ENCODE measurements at regions of chr16 and their contacts with region 1.

Region 1: DNA sequence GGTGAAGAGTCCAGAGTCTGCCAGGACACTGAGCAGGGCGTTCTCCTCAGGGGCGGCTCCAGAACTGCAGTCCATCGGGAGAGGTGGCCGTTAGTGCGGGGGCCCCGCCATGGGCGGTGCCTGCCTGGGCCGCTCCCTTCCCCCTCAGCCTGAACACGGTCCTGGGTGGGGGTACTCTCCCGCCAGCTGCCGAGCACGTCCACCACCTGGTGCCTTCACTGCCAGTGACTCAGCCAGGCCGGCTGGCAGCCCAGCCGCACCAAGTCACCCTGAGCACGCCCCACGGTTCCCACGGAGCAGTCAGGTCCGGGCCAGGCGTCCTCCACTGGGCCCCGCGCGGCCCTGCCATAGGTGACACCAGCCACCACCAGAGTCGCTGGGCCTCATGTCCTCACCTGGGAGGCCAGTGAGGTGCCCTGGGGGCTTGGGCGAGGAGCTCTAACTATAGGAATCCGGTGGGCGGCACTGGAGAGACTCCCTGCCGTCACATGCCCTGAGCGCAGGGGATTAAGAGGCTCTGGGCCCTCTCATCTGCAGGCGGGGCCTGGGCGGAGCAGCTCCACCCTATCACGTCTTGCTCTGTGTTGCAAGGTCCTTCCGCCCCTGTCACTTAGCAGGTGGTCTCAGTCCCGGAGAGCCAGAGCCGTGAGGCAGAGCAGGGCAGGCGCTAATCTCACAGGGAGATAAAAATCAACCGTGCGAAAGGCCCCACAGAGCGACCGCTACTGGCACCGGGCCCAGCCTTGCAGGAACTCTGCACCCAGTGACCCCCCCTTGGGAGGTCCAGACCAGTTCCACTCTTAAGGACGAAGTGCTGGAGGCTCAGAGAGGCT is 14.3 kb downstream of the PIEZO1 start:
- DNase-seq: peak; percentile 65
- H3K4me3 Mint-ChIP-seq: peak overlapping the region; percentile 56
- H3K27ac Mint-ChIP-seq: no peak overlapping the region
- H3K4me1 Mint-ChIP-seq: peaks cover 62% of the 10 kb centered on the region
- H3K27me3 Mint-ChIP-seq: no peaks in the 10 kb centered on the region
- CTCF ChIP-seq: no peak

Region 2: DNA sequence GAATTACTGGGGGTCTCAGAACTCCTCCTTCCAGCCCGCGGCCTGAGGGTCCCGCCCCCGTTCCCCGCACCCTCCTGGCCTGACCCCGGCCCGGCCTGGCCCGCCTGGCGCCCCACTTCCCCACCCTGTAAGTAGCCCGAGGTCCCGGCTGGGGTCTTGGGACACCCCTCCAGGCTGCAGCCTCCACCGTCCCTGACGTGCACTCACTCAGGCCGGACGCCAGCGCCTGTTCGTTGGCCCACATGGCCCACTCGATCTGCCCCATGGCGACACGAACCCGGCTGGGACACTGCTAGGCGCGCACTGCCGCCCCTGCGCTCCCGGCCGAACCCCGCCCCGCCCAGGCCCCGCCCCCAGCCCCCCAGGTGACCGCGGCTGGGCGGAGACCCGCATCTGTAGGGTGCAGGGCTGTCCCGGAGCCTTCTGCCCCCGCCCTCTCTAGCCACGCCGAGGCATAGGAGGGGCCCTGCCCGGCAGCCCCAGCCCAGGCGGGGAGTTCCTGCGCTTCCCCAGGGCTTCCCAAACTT is 119.9 kb before region 1 on chr16 and contains the start of gene CYBA:
- CTCF ChIA-PET with region 1: no interaction called
- intact Hi-C with region 1: no loop called
- DNase-seq: peak; percentile 95
- H3K4me3 Mint-ChIP-seq: peak within 1 kb of the TSS; percentile 91
- H3K27ac Mint-ChIP-seq: peak within 1 kb of the TSS; percentile 87
- H3K4me1 Mint-ChIP-seq: peaks cover 25% of the 10 kb centered on the region
- H3K27me3 Mint-ChIP-seq: no peaks in the 10 kb centered on the region
- CTCF ChIP-seq: no peak
- total RNA-seq, gene CYBA: 867 and 881 TPM in 2 replicates

Region 3: GRCh38 chr16:88743693-88744576 is 26.7 kb before region 1 on chr16:
- CTCF ChIA-PET with region 1: interaction called, 10 read pairs
- intact Hi-C with region 1: no loop called
- DNase-seq: peak; percentile 94
- H3K4me3 Mint-ChIP-seq: peak overlapping the region; percentile 24
- H3K27ac Mint-ChIP-seq: no peak overlapping the region
- H3K4me1 Mint-ChIP-seq: peaks cover 8% of the 10 kb centered on the region
- H3K27me3 Mint-ChIP-seq: no peaks in the 10 kb centered on the region
- CTCF ChIP-seq: peak; percentile 90

Region 4: GRCh38 chr16:88886845-88887521 is 116.3 kb after region 1 on chr16:
- CTCF ChIA-PET with region 1: no interaction called
- intact Hi-C with region 1: no loop called
- DNase-seq: no peak
- H3K4me3 Mint-ChIP-seq: no peak overlapping the region
- H3K27ac Mint-ChIP-seq: no peak overlapping the region
- H3K4me1 Mint-ChIP-seq: no peaks in the 10 kb centered on the region
- H3K27me3 Mint-ChIP-seq: peaks cover 38% of the 10 kb centered on the region
- CTCF ChIP-seq: no peak